H1 (cell line): ENCODE measurements at regions of chr17 and their contacts with region 1.

Region 1: DNA sequence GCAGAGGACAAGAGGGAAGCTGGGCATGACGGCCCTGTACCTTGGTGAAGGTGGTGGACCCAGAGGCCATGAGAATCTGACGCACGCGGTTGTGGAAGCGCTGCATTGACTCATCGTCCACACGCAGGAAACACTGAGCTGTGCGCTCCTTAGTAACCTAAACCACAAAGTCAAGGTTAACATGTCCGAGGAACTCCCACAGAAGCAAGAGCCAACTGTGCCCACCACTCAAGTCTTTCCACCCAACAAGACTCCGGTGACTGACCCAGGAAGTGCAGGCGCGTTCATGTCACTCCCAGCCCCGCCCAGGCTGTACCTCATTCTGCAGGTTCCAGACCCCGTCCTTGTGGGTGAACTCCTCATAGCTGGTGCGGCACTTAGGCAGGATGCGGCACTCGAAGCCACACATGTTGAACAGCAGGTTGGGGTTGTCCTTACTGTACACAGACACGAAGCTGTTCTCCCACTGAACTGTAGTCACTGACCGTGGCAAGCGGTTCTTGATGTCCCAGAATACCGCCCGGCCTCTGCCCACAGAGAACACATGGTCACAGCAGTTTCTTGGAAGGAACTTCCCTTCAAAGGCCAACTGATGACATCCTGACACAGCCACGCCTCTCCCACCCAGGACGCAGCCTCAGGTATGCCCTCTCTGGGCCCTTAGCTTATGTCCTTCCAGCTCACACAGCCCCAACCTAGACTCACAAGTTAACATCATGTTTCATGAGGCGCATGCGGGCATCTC is 11.5 kb downstream of the PRPF8 start:
- DNase-seq: no peak
- H3K4me3 ChIP-seq: no peak overlapping the region
- H3K27ac ChIP-seq: no peak overlapping the region
- H3K4me1 ChIP-seq: no peaks in the 10 kb centered on the region
- H3K27me3 ChIP-seq: no peaks in the 10 kb centered on the region
- CTCF ChIP-seq: no peak
- EP300 ChIP-seq: no peak
- POLR2A ChIP-seq: peak in 1 of 2 experiments; percentile 24; a peak in 1 of 3 replicates
- RAD21 ChIP-seq: no peak

Region 2: GRCh38 chr17:1648963-1649843 is 24.0 kb before region 1 on chr17:
- CTCF ChIA-PET with region 1: interaction called, 18 read pairs
- POLR2A ChIA-PET with region 1: interaction called, 65 read pairs
- DNase-seq: peak in 1 of 2 experiments; percentile 96
- H3K4me3 ChIP-seq: peak overlapping the region; percentile 26 to 77 (median 59)
- H3K27ac ChIP-seq: no peak overlapping the region
- H3K4me1 ChIP-seq: peaks cover 0 to 33% (median 22%) of the 10 kb centered on the region in 4 experiments; a peak in 6 of 7 replicates
- H3K27me3 ChIP-seq: peaks cover 0 to 11% (median 4%) of the 10 kb centered on the region in 4 experiments; a peak in 4 of 7 replicates
- CTCF ChIP-seq: peak; percentile 79 to 98 (median 92)
- EP300 ChIP-seq: no peak; a peak in 1 of 3 replicates
- POLR2A ChIP-seq: no peak
- RAD21 ChIP-seq: peak; percentile 45 to 67; a peak in 3 of 4 replicates

Region 3: DNA sequence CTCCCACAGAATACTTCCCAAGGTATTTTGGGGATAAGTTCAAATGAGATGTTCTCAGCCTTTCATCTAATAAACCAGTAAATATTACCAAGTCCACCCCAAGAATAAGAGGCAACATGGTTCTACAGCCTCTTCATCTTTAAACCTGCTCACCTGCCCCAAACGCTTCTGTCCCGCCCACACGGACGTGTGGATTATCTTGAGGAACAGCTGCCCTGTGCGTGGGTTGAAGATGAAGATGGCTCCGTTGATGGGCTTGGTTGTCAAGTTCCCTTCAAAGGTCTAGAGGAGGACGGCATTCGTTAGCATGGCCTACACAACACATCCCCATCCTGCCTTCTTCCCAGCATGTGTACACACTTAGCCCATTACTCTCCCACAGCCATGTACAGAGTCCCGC is 15.1 kb before region 1 on chr17:
- CTCF ChIA-PET with region 1: interaction called, 60 read pairs
- POLR2A ChIA-PET with region 1: interaction called, 65 read pairs
- DNase-seq: no peak
- H3K4me3 ChIP-seq: no peak overlapping the region
- H3K27ac ChIP-seq: no peak overlapping the region
- H3K4me1 ChIP-seq: no peaks in the 10 kb centered on the region
- H3K27me3 ChIP-seq: no peaks in the 10 kb centered on the region
- CTCF ChIP-seq: no peak
- EP300 ChIP-seq: no peak
- POLR2A ChIP-seq: no peak
- RAD21 ChIP-seq: no peak

Region 4: GRCh38 chr17:1684378-1685189 is 11.4 kb after region 1 on chr17 and contains the start of gene PRPF8:
- CTCF ChIA-PET with region 1: interaction called, 41 read pairs
- POLR2A ChIA-PET with region 1: interaction called, 8 read pairs
- DNase-seq: peak; percentile 90 to 98
- H3K4me3 ChIP-seq: peak within 1 kb of the TSS; percentile 78 to 87 (median 82)
- H3K27ac ChIP-seq: peak within 1 kb of the TSS; percentile 63; the same call in 1 of the 2 replicates
- H3K4me1 ChIP-seq: peaks cover 0 to 5% (median 3%) of the 10 kb centered on the region in 4 experiments; a peak in 3 of 7 replicates
- H3K27me3 ChIP-seq: no peaks in the 10 kb centered on the region
- CTCF ChIP-seq: no peak
- EP300 ChIP-seq: no peak
- POLR2A ChIP-seq: peak; percentile 63 to 84
- RAD21 ChIP-seq: no peak
- total RNA-seq, gene PRPF8: 328 and 329 TPM in 2 replicates

Region 5: DNA sequence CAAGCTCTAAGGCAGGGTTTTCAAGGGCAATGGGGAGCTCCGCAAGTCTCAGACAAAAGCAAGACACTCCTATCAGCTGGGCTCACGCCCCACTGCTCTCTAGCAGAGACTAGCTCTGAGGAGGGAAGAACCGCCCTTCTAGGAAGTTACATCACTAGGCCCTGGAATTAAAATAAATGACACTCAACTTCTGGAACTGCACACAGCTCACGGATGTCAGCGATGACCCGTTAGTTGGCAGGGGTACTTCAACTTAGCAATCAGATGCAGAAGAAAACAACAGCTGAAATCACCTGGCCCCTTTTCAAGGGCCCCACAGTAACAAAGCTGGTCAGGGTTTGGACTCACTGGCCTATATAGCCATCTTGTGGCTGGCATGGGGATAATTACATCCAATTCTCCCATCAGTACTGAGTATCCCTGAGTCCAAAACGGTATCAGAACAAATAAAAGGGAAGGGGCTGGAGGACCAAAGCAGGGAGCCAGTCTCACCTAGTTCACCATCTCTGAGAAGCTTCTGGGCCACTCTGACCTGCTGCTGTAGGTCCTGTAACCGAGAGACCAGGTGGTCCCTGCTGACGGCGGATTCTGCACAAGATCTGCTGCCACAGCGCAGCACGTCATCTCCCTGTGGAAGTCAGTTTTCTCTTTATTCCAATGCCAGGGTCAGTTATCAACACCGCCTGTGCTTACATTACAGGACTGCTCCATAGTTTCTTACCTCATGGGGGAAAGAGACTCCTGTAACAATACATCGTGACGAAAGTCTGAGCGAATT is 110.8 kb after region 1 on chr17:
- CTCF ChIA-PET with region 1: interaction called, 11 read pairs
- POLR2A ChIA-PET with region 1: no interaction called
- DNase-seq: no peak
- H3K4me3 ChIP-seq: no peak overlapping the region
- H3K27ac ChIP-seq: no peak overlapping the region
- H3K4me1 ChIP-seq: no peaks in the 10 kb centered on the region
- H3K27me3 ChIP-seq: no peaks in the 10 kb centered on the region
- CTCF ChIP-seq: peak; percentile 9 to 68 (median 59)
- EP300 ChIP-seq: no peak
- POLR2A ChIP-seq: no peak
- RAD21 ChIP-seq: peak; percentile 79 to 83